ENCODE measurements at regions of chr2 and their contacts with region 1.

Region 1: GRCh38 chr2:28958689-28959088 is 22.4 kb upstream of the TOGARAM2 start:
- DNase-seq: peak; percentile 53
- H3K4me3 ChIP-seq: no peak overlapping the region
- H3K27ac ChIP-seq: no peak overlapping the region
- H3K4me1 ChIP-seq: no peaks in the 10 kb centered on the region
- H3K27me3 ChIP-seq: no peaks in the 10 kb centered on the region
- CTCF ChIP-seq: peak; percentile 32

Region 2: GRCh38 chr2:29196792-29197788 is 238.4 kb after region 1 on chr2:
- intact Hi-C with region 1: loop called (anchors 1 kb)
- DNase-seq: peak; percentile 74
- H3K4me3 ChIP-seq: no peak overlapping the region
- H3K27ac ChIP-seq: no peak overlapping the region
- H3K4me1 ChIP-seq: no peaks in the 10 kb centered on the region
- H3K27me3 ChIP-seq: no peaks in the 10 kb centered on the region
- CTCF ChIP-seq: peak; percentile 76

Region 3: DNA sequence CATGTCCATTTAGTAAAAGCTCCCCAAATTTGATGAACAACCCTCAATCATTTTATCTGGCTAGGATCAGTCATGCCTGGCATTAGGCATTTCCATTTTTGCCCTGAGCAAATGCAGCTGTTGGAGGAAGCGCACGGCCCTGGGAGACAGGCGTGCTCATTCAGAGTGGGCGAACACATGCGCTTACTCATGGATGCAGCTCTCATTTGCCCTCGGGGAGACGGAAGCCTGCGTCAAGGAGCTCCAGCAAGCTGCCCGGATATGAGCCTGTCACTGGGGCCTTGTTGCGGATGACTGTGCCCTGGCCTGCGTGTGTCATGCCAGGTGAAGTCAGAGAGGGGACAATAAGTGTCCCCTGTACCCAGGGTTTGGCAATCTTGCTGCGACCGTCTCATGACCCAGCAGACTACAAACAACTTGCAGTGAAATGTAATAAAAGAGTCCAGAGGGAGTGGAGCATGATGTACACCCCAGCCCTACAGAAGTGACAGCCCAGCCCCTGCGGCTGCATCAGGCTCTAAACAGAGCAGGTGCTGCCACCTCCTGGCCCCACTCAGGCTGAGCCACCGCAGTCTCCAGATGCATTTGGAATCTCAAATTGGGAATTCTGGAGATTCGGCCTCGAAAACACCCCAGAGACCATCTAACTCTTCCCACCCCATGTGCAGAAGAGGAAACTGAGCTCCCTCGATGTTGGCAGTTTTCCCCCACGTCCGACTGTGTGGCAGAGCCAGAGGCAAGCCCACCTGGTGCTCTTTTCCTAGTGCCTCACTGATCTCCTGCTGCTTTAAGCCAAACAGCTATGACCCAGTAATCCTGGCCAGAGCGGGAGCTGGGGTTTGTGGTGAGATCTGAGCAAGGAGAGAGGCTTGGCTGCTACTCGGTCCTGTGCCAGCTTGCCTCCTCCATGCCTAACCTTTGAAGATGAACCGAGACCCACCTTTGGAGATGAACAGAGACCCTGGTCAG is 1067.7 kb after region 1 on chr2:
- intact Hi-C with region 1: loop called (anchors 5 kb)
- DNase-seq: no peak
- H3K4me3 ChIP-seq: no peak overlapping the region
- H3K27ac ChIP-seq: no peak overlapping the region
- H3K4me1 ChIP-seq: no peaks in the 10 kb centered on the region
- H3K27me3 ChIP-seq: no peaks in the 10 kb centered on the region
- CTCF ChIP-seq: peak; percentile 38

Region 4: DNA sequence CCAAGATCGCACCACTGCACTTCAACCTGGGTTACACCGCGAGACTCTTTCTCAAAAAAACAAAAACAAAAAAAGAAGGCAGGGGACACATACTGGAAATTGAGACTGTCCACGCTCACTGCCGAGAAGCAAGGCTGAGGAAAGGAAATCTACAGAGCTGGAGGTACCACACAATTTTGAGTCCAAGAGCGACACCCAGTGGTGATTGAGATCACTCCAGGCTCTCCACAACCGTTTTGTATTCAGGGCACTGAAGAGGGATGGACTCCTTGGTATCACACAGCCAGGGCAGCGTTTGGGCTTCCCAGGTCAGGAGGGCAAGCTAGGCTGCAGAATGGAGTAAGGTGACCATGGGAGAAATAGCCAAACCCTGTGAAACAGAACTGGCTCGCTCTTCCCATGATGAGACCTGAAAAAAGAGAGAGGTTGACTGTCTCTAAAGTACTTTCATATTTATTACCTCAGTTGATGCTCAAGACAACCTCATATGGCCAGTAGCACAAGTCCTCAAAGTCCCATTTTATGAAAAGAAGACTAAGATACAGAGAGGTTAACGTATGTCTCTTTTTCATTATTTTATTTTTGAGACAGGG is 1113.7 kb after region 1 on chr2:
- intact Hi-C with region 1: loop called (anchors 5 kb)
- DNase-seq: peak; percentile 63
- H3K4me3 ChIP-seq: no peak overlapping the region
- H3K27ac ChIP-seq: no peak overlapping the region
- H3K4me1 ChIP-seq: no peaks in the 10 kb centered on the region
- H3K27me3 ChIP-seq: no peaks in the 10 kb centered on the region
- CTCF ChIP-seq: peak; percentile 55

Measured in colonic mucosa (tissue), 4 donors.